ENCODE measurements at regions of chr14 and their contacts with region 1.

Region 1: GRCh38 chr14:68621400-68622365 is 171.2 kb downstream of the ZFP36L1 start:
- DNase-seq: no peak
- ATAC-seq: no peak
- H3K4me3 ChIP-seq: no peak overlapping the region
- H3K27ac ChIP-seq: peak overlapping the region; percentile 81 to 90 (median 88)
- H3K4me1 ChIP-seq: peaks cover 22 to 37% of the 10 kb centered on the region in 2 donors
- H3K27me3 ChIP-seq: no peaks in the 10 kb centered on the region
- CTCF ChIP-seq: no peak
- POLR2A ChIP-seq: no peak

Region 2: GRCh38 chr14:68589447-68590220 is 32.0 kb before region 1 on chr14:
- in situ Hi-C with region 1: no loop called
- intact Hi-C with region 1: loop called (anchors 2 kb)
- DNase-seq: peak in 1 of 2 donors; percentile 41
- ATAC-seq: peak in 1 of 2 donors; percentile 17
- H3K4me3 ChIP-seq: no peak overlapping the region
- H3K27ac ChIP-seq: peak overlapping the region; percentile 53 to 61 (median 57)
- H3K4me1 ChIP-seq: peaks cover 40 to 44% of the 10 kb centered on the region in 2 donors
- H3K27me3 ChIP-seq: no peaks in the 10 kb centered on the region
- CTCF ChIP-seq: no peak
- POLR2A ChIP-seq: no peak

Region 3: DNA sequence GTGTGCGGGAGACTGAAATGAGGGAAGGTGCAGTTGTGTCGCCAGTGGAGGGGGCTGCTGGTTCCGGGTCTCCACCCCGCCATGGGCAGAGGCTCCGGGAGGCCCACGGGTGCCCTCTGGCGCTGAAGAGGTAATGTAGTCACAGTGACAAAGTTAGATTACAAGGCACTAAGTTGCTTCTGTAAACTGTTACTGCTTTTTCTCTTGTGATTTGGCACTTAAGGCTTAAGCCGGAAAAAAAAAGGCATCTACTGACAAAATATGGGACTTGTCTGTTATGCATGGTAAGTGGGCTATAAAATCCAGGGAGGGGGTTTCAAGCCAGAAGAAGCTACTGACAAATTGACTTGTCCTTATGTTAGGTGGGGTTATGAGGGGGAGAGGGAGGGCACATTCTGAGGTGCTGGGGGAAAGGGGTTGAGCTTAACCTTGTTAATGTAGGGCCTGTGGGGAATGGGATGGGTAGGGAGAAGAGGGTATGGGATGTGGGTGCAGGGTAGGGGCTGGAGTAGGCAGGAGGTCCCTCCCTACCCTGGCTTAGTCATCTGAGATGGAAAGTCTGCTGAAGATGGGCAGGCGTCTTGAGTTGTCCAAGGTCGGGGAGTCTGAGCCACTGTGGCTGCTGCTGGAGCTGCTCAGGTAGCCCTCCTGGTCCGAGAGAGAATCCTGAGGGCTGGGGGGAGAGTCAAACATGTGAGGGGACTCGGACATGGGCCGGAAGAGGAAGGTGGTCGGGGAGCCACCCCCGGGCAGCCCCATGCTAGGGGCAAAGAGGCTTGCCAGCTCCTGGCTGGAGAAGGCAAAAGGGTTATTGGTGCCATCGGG is 167.5 kb after region 1 on chr14:
- in situ Hi-C with region 1: no loop called
- intact Hi-C with region 1: loop called (anchors 2 kb)
- DNase-seq: peak; percentile 73 to 88
- ATAC-seq: peak in 1 of 2 donors; percentile 32
- H3K4me3 ChIP-seq: peak overlapping the region; percentile 72 to 90 (median 82)
- H3K27ac ChIP-seq: peak overlapping the region; percentile 97 to 100 (median 98)
- H3K4me1 ChIP-seq: peaks cover 13 to 25% of the 10 kb centered on the region in 2 donors
- H3K27me3 ChIP-seq: no peaks in the 10 kb centered on the region
- CTCF ChIP-seq: peak; percentile 54 to 75 (median 69)
- POLR2A ChIP-seq: peak in 1 of 2 donors; percentile 23